ENCODE measurements at regions of chr10 and their contacts with region 1.

Region 1: DNA sequence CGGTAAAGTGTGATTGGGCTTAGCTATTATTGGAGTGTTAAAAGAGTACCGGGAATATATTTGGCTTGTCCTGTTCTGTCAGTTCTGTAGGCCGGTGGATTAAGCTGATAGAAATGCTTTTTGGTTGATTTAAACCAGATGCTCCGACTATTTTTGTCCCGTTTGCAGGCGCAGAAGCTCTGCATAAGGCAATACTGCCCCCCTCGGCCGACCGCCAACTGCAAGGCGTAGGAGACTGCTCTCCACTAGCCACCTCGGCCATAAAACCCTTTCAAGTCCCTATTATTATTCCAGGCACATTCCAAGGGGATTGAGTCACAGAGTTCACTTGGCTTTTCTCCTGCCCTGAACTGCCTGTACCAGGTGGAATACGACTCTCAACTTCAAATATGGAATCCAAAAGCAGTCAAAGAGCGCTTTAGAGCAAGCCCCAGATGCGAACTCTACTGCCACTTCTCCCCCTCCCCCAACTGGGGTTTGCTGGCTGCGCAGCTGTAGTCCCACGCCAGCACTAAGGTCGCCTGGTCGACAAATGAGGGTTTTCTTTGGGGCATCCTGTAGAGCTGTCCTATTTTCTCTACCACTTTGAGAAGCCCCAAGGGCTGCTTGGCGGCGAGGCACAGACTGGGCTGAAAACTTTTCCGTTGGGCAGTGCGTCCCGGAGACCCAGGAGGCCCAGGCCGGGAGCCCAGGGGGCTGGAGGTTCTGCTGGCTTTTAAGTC is 108.3 kb downstream of the REEP3 start:
- DNase-seq: peak in 1 of 2 donors; percentile 98
- H3K4me3 ChIP-seq: peak overlapping the region; percentile 53 to 62
- H3K27ac ChIP-seq: peak overlapping the region; percentile 92
- H3K4me1 ChIP-seq: peaks cover 33% of the 10 kb centered on the region
- H3K27me3 ChIP-seq: no peaks in the 10 kb centered on the region
- CTCF ChIP-seq: peak; percentile 21 to 56 (median 44)
- POLR2A ChIP-seq: no peak

Region 2: GRCh38 chr10:63268798-63269503 is 360.6 kb before region 1 on chr10:
- intact Hi-C with region 1: loop called (anchors 5 kb)
- DNase-seq: peak; percentile 98
- H3K4me3 ChIP-seq: peak overlapping the region; percentile 56 to 59
- H3K27ac ChIP-seq: peak overlapping the region; percentile 94
- H3K4me1 ChIP-seq: peaks cover 40% of the 10 kb centered on the region
- H3K27me3 ChIP-seq: no peaks in the 10 kb centered on the region
- CTCF ChIP-seq: peak in 2 of 3 experiments; percentile 36 to 50
- POLR2A ChIP-seq: peak in 1 of 2 donors; percentile 93

Region 3: DNA sequence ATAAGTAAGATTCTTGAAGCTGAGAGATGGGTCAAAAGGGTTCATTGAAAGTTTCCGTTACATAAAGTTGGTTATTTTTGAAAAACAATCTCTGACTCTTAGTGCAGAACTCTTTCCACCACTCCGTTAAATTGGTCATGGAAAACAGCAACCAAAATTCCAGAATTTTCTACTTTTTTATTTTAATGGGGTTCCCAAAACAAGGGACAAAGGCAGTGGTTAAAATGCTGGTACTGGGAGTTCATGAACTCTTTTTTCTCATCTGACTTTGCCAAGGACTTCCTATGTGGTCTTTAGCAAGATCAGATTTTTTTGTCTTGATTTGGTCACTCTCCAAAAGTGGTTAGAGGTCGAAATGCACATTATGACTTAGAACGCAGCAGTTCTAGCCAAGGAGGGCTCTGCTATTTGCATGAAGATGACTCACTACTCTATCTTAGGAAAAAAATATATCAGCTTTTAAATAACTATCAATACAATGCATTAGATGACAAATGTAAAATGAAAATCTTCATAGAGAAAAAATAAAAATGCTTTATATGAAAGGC is 37.4 kb after region 1 on chr10:
- intact Hi-C with region 1: loop called (anchors 5 kb)
- DNase-seq: no peak
- H3K4me3 ChIP-seq: no peak overlapping the region
- H3K27ac ChIP-seq: peak overlapping the region; percentile 51
- H3K4me1 ChIP-seq: peaks cover 29% of the 10 kb centered on the region
- H3K27me3 ChIP-seq: no peaks in the 10 kb centered on the region
- CTCF ChIP-seq: no peak
- POLR2A ChIP-seq: no peak

Region 4: DNA sequence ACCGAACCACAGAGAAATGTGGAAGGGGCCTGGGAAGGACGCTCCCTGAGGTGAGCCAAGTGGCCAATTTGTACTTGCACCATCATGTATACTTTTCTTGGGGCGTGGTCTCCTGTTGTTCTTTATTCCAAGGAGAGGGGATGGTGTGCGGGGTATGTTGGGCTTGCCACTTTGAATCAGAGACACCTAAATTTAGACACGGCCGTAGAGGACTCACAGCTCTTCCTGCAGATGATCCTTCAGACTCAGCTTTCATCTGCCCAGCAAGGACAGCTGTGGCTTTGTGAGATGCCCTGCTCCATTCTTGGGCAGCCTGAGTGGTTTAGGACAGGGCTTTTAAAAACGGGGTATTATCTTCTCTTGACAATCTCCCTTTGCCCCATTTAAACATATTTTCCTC is 364.8 kb after region 1 on chr10:
- intact Hi-C with region 1: no loop called
- DNase-seq: no peak
- H3K4me3 ChIP-seq: no peak overlapping the region
- H3K27ac ChIP-seq: no peak overlapping the region
- H3K4me1 ChIP-seq: no peaks in the 10 kb centered on the region
- H3K27me3 ChIP-seq: no peaks in the 10 kb centered on the region
- CTCF ChIP-seq: no peak
- POLR2A ChIP-seq: no peak

Measured in vagina (tissue), 2 donors.